ENCODE measurements at regions of chr2 and their contacts with region 1.

Region 1: DNA sequence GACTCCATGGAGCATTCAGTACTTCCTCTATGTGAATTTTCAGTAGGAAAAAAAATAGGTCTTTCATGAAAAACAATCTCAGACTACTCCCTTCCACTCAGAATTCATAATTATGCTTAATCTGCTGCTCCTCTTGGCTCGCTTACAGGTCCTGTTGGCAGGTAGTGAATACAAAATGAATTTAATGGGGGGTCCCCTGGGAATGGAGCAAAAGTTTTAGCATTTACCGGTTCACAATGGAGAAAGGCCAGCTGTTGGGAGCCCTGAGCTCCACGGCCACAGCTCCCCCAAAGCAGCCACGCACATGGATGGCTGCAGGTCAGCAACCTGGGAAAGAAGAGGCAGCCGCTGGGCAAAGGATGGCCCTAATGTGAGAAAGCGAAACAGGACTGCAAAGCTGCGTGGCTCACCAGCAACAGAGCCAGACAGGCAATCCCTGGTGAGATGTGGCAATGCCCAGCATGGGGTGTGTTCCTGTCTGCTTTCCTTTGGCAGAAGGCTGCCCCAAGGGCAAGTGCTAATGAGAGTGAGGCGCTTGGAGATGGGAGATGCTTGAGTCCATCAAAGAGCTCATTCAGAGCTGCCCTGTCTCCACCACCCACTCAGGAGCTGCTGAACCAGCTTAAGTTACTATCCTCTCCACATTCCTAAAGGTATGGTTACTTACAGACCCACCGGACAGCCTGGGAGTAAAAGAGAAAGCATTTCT is 447.4 kb downstream of the EPHA4 start:
- DNase-seq: no peak
- ATAC-seq: no peak
- H3K4me3 ChIP-seq: no peak overlapping the region
- H3K4me3 Mint-ChIP-seq: no peak overlapping the region
- H3K27ac ChIP-seq: no peak overlapping the region
- H3K27ac Mint-ChIP-seq: no peak overlapping the region
- H3K4me1 ChIP-seq: no peaks in the 10 kb centered on the region
- H3K4me1 Mint-ChIP-seq: no peaks in the 10 kb centered on the region
- H3K27me3 ChIP-seq: peaks cover 0 to 5% of the 10 kb centered on the region in 2 experiments
- H3K27me3 Mint-ChIP-seq: peaks cover 7 to 8% of the 10 kb centered on the region in 2 donors

Region 2: DNA sequence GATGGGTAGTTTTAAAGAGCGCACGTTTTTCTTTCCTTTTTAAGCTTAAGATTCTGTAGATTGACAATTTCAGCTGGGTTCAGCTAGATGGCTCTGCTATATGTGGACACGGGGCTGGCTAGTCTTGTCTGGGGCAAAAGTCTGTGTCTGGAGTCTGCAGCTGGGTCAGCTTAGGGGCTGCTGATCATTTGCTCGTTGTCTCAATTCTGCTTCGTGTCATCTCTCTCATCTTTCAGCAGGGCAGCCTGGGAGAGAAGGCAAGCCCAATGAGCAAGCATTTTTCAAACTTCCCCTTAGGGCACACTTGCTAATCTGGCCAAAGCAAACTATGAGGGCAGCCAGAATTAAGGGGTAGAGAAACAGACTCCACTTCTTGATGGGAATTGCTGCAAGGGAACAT is 1034.7 kb before region 1 on chr2:
- CTCF ChIA-PET with region 1: no interaction called
- POLR2A ChIA-PET with region 1: interaction called in 1 of 2 experiments, 21 read pairs
- DNase-seq: no peak
- ATAC-seq: no peak
- H3K4me3 ChIP-seq: no peak overlapping the region
- H3K4me3 Mint-ChIP-seq: no peak overlapping the region
- H3K27ac ChIP-seq: no peak overlapping the region
- H3K27ac Mint-ChIP-seq: no peak overlapping the region
- H3K4me1 ChIP-seq: no peaks in the 10 kb centered on the region
- H3K4me1 Mint-ChIP-seq: no peaks in the 10 kb centered on the region
- H3K27me3 ChIP-seq: peaks cover 0 to 6% of the 10 kb centered on the region in 2 experiments
- H3K27me3 Mint-ChIP-seq: peaks cover 0 to 8% of the 10 kb centered on the region in 2 donors

Measured in T-cell (primary cell).